ENCODE measurements at regions of chr14 and their contacts with region 1.

Region 1: DNA sequence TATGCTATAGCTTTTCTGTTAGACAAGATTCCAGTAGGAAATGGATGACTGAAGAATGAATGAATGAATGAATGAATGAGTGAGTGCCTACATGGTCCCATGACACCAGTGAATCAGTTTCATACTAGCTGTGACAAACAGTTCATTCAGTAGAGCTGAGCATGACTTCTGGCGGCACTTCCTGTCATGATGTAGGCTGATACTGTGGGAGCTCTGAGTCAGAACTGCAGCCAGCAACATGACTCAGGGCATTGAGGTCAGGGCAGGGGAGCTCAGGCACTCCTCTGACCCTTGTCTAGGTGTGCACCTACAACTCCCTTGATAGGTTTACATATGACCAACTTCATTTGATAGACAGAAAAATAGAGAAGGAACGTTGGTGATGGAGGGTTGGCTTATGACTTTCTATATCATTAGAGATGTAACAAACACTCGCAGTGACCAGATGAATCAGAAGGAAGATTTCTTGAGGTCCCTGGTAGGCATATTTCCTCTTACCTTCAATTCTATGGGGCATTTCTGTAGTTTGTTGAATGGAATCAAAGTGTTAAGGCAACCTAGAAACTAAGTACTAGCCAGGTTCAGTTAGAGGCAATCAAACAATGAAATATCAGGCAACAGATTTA is 139.3 kb upstream of the ARHGAP5 start:
- DNase-seq: peak; percentile 48 to 70
- H3K4me3 ChIP-seq: no peak overlapping the region
- H3K4me3 Mint-ChIP-seq: no peak overlapping the region
- H3K27ac Mint-ChIP-seq: peak overlapping the region; percentile 84
- H3K4me1 ChIP-seq: peaks cover 55% of the 10 kb centered on the region
- H3K4me1 Mint-ChIP-seq: peaks cover 42% of the 10 kb centered on the region
- H3K27me3 ChIP-seq: no peaks in the 10 kb centered on the region
- H3K27me3 Mint-ChIP-seq: no peaks in the 10 kb centered on the region
- CTCF ChIP-seq: no peak

Region 2: DNA sequence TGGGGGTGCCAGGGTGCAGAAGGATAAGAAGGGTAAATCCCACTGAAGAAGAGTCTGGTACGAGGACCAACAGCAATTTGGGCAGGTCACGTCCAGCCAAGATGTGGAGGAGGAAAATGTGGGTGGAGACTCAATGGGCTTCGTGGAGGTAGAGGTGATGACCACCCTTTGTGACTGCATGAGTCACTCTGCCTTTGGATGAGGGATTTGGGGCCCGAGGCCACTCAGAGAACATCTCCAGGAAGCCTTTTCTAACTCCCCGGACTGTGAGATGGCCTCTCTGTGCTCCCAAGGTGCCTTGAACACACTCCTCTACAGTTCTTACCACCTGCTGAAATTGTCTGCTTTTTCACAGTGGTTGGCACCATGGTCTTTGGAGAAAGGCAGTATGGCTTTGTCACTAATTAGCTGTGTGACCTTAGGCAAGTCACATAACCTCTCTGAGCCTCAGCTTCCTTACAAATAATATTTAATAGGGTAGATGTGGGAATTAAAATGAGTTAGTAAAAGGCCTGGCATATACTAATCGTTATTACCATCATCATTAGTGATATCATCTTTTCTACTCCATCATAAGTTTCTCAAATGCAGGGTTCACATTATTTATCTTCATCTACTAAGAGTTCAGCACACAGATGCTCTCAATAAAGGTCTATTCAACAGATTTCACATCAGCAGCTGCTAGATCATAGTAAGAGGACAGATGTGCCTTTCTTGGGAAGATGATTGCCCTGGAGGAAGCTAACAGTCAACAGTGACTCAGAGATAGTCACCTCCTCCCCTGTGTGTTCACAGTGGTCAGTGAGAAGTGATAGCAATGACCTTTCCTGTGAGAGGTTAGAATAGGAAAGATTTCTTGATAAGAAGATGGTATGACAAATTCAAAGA is 72.4 kb after region 1 on chr14:
- CTCF ChIA-PET with region 1: no interaction called
- POLR2A ChIA-PET with region 1: no interaction called
- intact Hi-C with region 1: loop called (anchors 1 kb)
- DNase-seq: peak; percentile 52 to 55
- H3K4me3 ChIP-seq: no peak overlapping the region
- H3K4me3 Mint-ChIP-seq: no peak overlapping the region
- H3K27ac Mint-ChIP-seq: peak overlapping the region; percentile 40
- H3K4me1 ChIP-seq: peaks cover 59% of the 10 kb centered on the region
- H3K4me1 Mint-ChIP-seq: peaks cover 52% of the 10 kb centered on the region
- H3K27me3 ChIP-seq: no peaks in the 10 kb centered on the region
- H3K27me3 Mint-ChIP-seq: no peaks in the 10 kb centered on the region
- CTCF ChIP-seq: no peak

Region 3: DNA sequence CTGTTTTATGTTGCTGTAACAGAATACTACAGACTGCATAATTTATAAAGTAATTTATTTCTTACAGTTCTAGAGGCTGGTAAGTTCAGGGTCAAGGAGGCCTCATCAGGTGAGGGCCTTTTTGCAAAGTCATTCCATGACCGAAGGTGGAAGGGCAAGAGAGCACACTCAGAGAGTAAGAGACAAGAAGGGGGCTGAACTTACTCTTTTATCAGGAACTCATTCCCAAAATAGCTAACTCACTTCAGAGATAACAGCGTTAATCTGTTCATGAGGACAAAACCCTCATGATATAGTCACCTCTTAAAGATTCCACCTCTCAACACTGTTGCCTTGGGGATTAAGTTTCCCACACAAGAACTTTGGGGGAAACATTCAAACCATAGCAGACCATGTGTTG is 212.6 kb after region 1 on chr14:
- CTCF ChIA-PET with region 1: no interaction called
- POLR2A ChIA-PET with region 1: no interaction called
- intact Hi-C with region 1: loop called (anchors 10 kb)
- DNase-seq: peak in 1 of 2 experiments; percentile 31
- H3K4me3 ChIP-seq: no peak overlapping the region
- H3K4me3 Mint-ChIP-seq: no peak overlapping the region
- H3K27ac Mint-ChIP-seq: peak overlapping the region; percentile 45
- H3K4me1 ChIP-seq: peaks cover 14% of the 10 kb centered on the region
- H3K4me1 Mint-ChIP-seq: no peaks in the 10 kb centered on the region
- H3K27me3 ChIP-seq: no peaks in the 10 kb centered on the region
- H3K27me3 Mint-ChIP-seq: no peaks in the 10 kb centered on the region
- CTCF ChIP-seq: no peak

Region 4: DNA sequence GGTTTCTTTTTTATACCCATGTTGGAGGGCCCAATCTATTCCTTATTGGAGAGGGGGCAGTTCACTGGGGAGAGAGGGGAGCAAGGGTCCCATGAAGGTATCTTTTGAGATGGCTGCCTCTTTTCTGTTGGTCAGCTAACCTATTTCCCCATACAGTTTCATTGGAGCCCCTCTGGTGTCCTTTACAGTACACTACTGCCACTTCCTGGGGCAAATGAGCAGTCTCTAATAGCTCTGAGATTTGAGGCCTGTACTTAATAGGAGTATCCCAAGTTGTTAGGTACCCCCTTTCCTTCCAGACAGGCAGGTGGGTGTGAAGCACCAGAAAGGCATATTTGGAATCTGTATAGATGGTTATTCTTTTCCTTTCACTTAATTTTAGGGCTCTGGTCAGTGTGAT is 306.6 kb after region 1 on chr14:
- CTCF ChIA-PET with region 1: interaction called, 4 read pairs
- POLR2A ChIA-PET with region 1: no interaction called
- intact Hi-C with region 1: loop called (anchors 2 kb)
- DNase-seq: no peak
- H3K4me3 ChIP-seq: no peak overlapping the region
- H3K4me3 Mint-ChIP-seq: no peak overlapping the region
- H3K27ac Mint-ChIP-seq: no peak overlapping the region
- H3K4me1 ChIP-seq: no peaks in the 10 kb centered on the region
- H3K4me1 Mint-ChIP-seq: no peaks in the 10 kb centered on the region
- H3K27me3 ChIP-seq: no peaks in the 10 kb centered on the region
- H3K27me3 Mint-ChIP-seq: no peaks in the 10 kb centered on the region
- CTCF ChIP-seq: no peak

Region 5: GRCh38 chr14:32469388-32470160 is 531.7 kb after region 1 on chr14:
- CTCF ChIA-PET with region 1: interaction called, 3 read pairs
- POLR2A ChIA-PET with region 1: no interaction called
- intact Hi-C with region 1: loop called (anchors 2 kb)
- DNase-seq: no peak
- H3K4me3 ChIP-seq: no peak overlapping the region
- H3K4me3 Mint-ChIP-seq: no peak overlapping the region
- H3K27ac Mint-ChIP-seq: no peak overlapping the region
- H3K4me1 ChIP-seq: peaks cover 39% of the 10 kb centered on the region
- H3K4me1 Mint-ChIP-seq: peaks cover 31% of the 10 kb centered on the region
- H3K27me3 ChIP-seq: no peaks in the 10 kb centered on the region
- H3K27me3 Mint-ChIP-seq: no peaks in the 10 kb centered on the region
- CTCF ChIP-seq: peak; percentile 41 to 51